ENCODE measurements at regions of chr3 and their contacts with region 1.

Region 1: GRCh38 chr3:101709126-101709525 is 15.3 kb upstream of the CEP97 start:
- DNase-seq: no peak
- H3K4me3 ChIP-seq: no peak overlapping the region
- H3K27ac ChIP-seq: no peak overlapping the region
- H3K4me1 ChIP-seq: no peaks in the 10 kb centered on the region
- H3K27me3 ChIP-seq: no peaks in the 10 kb centered on the region
- CTCF ChIP-seq: no peak
- EP300 ChIP-seq: no peak
- POLR2A ChIP-seq: no peak
- RAD21 ChIP-seq: no peak

Region 2: DNA sequence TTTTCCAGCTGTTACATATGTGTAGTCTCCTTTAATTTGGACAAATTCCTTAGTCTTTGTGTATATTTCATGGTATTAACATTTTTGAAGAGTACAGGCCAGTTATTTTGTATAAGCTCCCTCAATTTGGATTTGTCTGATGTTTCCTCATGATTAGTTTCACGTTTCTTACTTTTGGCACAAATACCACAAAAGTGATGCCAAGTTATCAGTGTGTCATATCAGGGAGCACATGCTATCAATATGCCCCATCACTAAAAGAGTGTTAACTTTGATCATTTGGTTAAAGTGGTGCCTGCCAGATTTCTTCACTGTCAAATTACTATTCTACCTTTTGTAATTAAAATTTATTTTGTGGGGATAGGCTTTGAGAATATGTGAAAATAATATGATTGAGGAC is 120.5 kb before region 1 on chr3:
- CTCF ChIA-PET with region 1: no interaction called
- POLR2A ChIA-PET with region 1: no interaction called
- DNase-seq: no peak
- H3K4me3 ChIP-seq: no peak overlapping the region
- H3K27ac ChIP-seq: no peak overlapping the region
- H3K4me1 ChIP-seq: no peaks in the 10 kb centered on the region
- H3K27me3 ChIP-seq: no peaks in the 10 kb centered on the region
- CTCF ChIP-seq: no peak
- EP300 ChIP-seq: no peak
- POLR2A ChIP-seq: no peak
- RAD21 ChIP-seq: no peak

Region 3: DNA sequence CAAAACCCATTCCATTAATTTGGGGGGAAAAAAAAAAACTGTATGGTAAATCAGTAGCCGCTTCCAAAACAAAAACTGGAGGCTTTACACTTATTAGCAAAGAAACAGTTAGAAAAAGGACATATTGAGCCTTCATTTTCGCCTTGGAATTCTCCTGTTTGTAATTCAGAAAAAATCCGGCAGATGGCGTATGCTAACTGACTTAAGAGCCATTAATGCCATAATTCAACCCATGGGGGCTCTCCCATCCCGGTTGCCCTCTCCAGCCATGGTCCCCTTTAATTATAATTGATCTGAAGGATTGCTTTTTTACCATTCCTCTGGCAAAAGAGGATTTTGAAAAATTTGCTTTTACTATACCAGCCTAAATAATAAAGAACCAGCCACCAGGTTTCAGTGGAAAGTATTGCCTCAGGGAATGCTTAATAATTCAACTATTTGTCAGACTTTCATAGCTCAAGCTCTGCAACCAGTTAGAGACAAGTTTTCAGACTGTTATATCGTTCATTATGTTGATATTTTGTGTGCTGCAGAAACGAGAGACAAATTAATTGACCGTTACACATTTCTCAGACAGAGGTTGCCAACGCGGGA is 13.2 kb before region 1 on chr3:
- CTCF ChIA-PET with region 1: interaction called, 13 read pairs
- POLR2A ChIA-PET with region 1: interaction called, 3 read pairs
- DNase-seq: no peak
- H3K4me3 ChIP-seq: no peak overlapping the region
- H3K27ac ChIP-seq: no peak overlapping the region
- H3K4me1 ChIP-seq: peaks cover 0 to 3% (median 0%) of the 10 kb centered on the region in 4 experiments; a peak in 2 of 7 replicates
- H3K27me3 ChIP-seq: no peaks in the 10 kb centered on the region
- CTCF ChIP-seq: peak in 2 of 3 experiments; percentile 58 to 73; a peak in 2 of 4 replicates
- EP300 ChIP-seq: no peak
- POLR2A ChIP-seq: no peak
- RAD21 ChIP-seq: peak; percentile 68 to 75

Region 4: DNA sequence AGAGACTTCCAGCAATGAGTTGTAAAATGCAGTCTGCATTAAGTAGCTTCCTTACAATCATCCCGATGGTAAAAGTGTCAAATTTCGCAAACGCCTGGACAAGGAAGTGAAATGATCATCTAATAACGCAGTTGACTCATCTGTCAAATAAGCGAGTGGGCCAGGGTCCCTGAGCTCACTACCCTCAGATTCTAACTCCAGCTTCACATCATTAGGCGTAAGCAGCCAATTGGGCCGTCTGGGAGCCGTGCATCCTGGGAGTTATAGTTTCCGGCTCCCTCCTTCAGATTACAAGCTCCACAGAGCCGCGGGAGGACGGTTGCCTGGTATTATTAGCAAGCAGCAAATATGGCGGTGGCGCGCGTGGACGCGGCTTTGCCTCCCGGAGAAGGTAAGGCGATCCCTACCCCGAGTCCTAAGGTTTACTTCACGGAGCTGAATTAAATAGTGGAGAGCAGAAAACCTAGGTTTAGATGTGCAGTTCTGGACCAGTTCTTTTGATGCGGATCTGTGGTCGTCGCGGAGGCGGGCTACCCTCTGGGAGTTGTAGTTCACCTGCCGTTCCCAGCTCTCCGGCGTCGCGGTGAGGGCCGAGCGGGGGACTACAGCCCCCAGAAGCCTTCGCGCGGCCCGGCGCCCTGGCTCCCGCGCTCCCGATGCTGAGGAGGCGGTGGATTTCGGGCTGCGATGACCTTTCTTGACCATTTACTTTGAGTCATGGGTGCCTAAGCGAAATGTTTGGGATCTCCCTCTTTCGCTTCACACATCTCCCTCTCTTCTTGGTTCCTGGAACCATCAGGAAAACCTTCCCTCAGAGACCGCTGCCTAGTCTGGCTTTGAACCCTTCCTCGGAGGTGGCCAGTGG is 15.4 kb after region 1 on chr3 and contains the start of gene CEP97:
- CTCF ChIA-PET with region 1: interaction called, 38 read pairs
- POLR2A ChIA-PET with region 1: no interaction called
- DNase-seq: peak; percentile 70 to 92
- H3K4me3 ChIP-seq: peak within 1 kb of the TSS; percentile 92 to 99 (median 98)
- H3K27ac ChIP-seq: peak within 1 kb of the TSS; percentile 25; the same call in 1 of the 2 replicates
- H3K4me1 ChIP-seq: no peaks in the 10 kb centered on the region
- H3K27me3 ChIP-seq: no peaks in the 10 kb centered on the region
- CTCF ChIP-seq: no peak
- EP300 ChIP-seq: no peak
- POLR2A ChIP-seq: peak in 1 of 2 experiments; percentile 56; a peak in 1 of 3 replicates
- RAD21 ChIP-seq: no peak
- total RNA-seq, gene CEP97: 13.2 and 15.1 TPM in 2 replicates

Region 5: GRCh38 chr3:101854621-101855304 is 145.6 kb after region 1 on chr3:
- CTCF ChIA-PET with region 1: no interaction called
- POLR2A ChIA-PET with region 1: no interaction called
- DNase-seq: no peak
- H3K4me3 ChIP-seq: no peak overlapping the region
- H3K27ac ChIP-seq: no peak overlapping the region
- H3K4me1 ChIP-seq: no peaks in the 10 kb centered on the region
- H3K27me3 ChIP-seq: peaks cover 0 to 1% (median 0%) of the 10 kb centered on the region in 4 experiments; a peak in 1 of 7 replicates
- CTCF ChIP-seq: no peak
- EP300 ChIP-seq: no peak
- POLR2A ChIP-seq: no peak
- RAD21 ChIP-seq: no peak

Measured in H1 (cell line).